Endothelial cell of umbilical vein (primary cell): ENCODE measurements at regions of chr1 and their contacts with region 1.

Region 1: DNA sequence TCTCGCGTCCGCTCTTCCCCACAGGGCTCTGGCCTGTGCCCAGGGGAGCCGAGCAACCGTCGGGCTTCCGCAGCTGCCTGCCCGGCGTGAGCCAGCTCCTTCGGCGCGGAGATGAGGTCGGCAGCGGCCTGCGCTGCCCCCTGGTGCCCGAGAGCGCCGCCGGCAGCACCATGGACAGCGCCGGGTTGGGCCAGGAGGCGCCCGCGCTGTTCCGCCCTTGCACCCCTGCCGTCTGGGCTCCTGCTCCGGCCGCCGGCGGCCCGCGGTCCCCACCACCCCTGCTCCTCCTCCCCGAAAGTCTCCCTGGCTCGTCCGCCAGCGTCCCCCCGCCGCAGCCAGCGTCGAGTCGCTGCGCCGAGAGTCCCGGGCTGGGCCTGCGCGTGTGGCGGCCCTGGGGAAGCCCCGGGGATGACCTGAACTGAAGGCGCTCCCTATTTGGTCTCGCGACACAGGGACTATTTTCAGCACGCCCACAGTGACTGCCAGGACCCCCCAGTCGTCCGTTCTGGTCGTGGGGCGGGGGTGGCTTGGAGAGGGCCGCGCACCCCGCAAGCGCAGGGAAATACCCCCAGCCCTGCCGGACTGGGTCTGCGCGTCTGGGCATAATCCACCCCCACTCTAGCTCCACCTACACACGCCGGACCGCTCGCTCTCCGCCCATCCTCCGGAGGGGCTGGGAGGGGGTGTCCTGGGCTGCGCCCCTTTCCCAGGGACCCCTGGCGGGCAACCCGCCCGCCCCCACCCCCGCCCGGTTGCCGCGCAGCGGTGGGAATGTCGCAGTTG is 1.3 kb downstream of the HES3 start:
- DNase-seq: peak; percentile 66
- H3K4me3 ChIP-seq: peak overlapping the region; percentile 5 to 28 (median 15)
- H3K27ac ChIP-seq: no peak overlapping the region
- H3K4me1 ChIP-seq: peaks cover 5% of the 10 kb centered on the region
- H3K27me3 ChIP-seq: peaks cover 33 to 50% of the 10 kb centered on the region in 2 experiments
- CTCF ChIP-seq: peak; percentile 85 to 95
- POLR2A ChIP-seq: no peak

Region 2: DNA sequence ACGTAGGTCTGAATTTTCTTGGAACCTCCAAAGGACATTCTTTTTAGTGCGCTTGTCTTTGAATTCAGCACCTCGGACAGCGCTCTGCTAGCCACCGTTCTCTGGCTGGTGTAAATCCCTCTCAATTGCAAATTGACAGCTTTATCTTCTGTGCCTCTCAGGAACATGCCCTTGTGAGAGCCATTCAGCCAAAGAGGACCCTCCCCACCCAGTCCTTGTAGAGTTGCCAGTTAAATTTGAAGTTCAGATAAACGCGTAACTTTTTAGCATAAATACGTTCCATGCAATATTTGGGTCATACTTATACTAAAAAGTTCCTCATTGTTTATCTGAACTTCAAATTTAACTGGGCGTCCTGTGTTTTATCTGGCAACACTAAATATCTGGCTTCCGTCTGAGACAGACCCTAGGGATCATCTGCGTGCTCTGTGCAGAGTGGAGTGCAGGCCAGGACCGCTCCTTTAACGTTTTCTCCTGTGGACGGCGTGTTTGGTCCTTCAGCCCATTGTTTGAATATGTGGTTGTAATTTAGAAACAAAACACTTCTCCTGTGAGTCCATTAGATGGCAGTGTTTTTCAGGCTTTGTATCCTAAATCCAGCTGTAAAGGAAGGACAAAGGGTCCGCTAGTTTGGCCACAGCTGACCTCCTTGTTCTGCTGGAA is 192.6 kb before region 1 on chr1:
- CTCF ChIA-PET with region 1: interaction called, 93 read pairs
- POLR2A ChIA-PET with region 1: no interaction called
- dilution Hi-C with region 1: no loop called
- intact Hi-C with region 1: loop called (anchors 1 kb)
- DNase-seq: peak; percentile 70
- H3K4me3 ChIP-seq: no peak overlapping the region
- H3K27ac ChIP-seq: no peak overlapping the region
- H3K4me1 ChIP-seq: no peaks in the 10 kb centered on the region
- H3K27me3 ChIP-seq: no peaks in the 10 kb centered on the region
- CTCF ChIP-seq: peak; percentile 59 to 62
- POLR2A ChIP-seq: no peak

Region 3: GRCh38 chr1:6185635-6186382 is 59.5 kb before region 1 on chr1:
- CTCF ChIA-PET with region 1: interaction called, 14 read pairs
- POLR2A ChIA-PET with region 1: no interaction called
- dilution Hi-C with region 1: no loop called
- intact Hi-C with region 1: no loop called
- DNase-seq: peak; percentile 26
- H3K4me3 ChIP-seq: no peak overlapping the region
- H3K27ac ChIP-seq: no peak overlapping the region
- H3K4me1 ChIP-seq: no peaks in the 10 kb centered on the region
- H3K27me3 ChIP-seq: peaks cover 10 to 11% of the 10 kb centered on the region in 2 experiments
- CTCF ChIP-seq: peak; percentile 43 to 44
- POLR2A ChIP-seq: no peak

Region 4: DNA sequence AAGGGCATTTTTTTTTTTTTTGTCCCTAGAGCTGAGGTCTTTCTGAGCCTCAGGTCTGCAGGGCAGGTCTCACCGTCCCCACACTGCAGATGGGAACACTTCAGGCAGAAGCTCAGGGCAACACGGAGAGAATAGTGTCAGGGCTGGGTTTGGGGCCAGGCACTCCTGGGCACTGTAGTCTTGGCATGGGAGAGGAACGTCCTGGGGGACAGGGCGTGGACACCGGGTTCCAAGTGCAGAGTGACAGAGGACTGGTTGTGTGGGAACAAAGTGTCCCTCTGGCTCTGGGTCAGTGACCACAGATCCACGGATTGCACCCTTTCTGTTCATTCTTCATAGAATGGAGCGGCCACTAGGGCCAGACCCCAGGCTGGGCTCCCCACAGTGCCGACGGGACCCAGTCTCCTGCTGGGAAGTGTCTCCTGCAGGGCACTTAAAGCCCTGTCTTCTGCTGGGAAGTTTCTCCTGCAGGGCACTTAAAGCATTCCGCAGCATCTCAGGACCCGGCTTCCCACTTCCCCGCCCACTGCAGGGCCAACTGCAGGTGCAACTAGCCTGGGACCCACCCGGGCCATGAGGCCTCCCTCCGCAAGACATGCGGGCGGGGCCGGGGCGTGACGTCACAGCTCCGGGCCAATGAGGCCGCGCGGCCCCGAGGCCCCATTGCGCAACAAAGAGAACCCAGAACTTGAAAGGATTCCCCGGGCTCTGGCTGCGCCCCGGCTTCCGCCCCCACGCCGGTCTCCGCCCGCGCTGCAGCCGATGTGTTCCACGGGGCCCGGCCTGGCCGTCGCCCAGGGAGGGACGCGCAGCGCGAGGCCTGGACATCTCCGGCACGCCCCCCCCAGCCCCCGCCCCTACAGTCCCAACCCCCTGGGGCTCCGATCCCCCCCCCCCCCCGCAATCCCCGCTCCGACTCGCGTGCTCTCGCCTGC is 14.5 kb after region 1 on chr1:
- CTCF ChIA-PET with region 1: interaction called, 21 read pairs
- POLR2A ChIA-PET with region 1: no interaction called
- dilution Hi-C with region 1: no loop called
- intact Hi-C with region 1: loop called (anchors 1 kb)
- DNase-seq: peak; percentile 64
- H3K4me3 ChIP-seq: peak overlapping the region in 2 of 3 experiments; percentile 34 to 55
- H3K27ac ChIP-seq: no peak overlapping the region
- H3K4me1 ChIP-seq: no peaks in the 10 kb centered on the region
- H3K27me3 ChIP-seq: no peaks in the 10 kb centered on the region
- CTCF ChIP-seq: no peak
- POLR2A ChIP-seq: no peak

Region 5: GRCh38 chr1:6343506-6344405 is 98.5 kb after region 1 on chr1:
- CTCF ChIA-PET with region 1: interaction called, 208 read pairs
- POLR2A ChIA-PET with region 1: no interaction called
- dilution Hi-C with region 1: no loop called
- intact Hi-C with region 1: loop called (anchors 1 kb)
- DNase-seq: peak; percentile 67
- H3K4me3 ChIP-seq: no peak overlapping the region
- H3K27ac ChIP-seq: no peak overlapping the region
- H3K4me1 ChIP-seq: peaks cover 7% of the 10 kb centered on the region
- H3K27me3 ChIP-seq: no peaks in the 10 kb centered on the region
- CTCF ChIP-seq: peak; percentile 89 to 94
- POLR2A ChIP-seq: no peak

Region 6: GRCh38 chr1:6401673-6402072 is 156.4 kb after region 1 on chr1:
- CTCF ChIA-PET with region 1: interaction called, 39 read pairs
- POLR2A ChIA-PET with region 1: no interaction called
- dilution Hi-C with region 1: no loop called
- intact Hi-C with region 1: loop called (anchors 1 kb)
- DNase-seq: no peak
- H3K4me3 ChIP-seq: no peak overlapping the region
- H3K27ac ChIP-seq: no peak overlapping the region
- H3K4me1 ChIP-seq: no peaks in the 10 kb centered on the region
- H3K27me3 ChIP-seq: no peaks in the 10 kb centered on the region
- CTCF ChIP-seq: no peak
- POLR2A ChIP-seq: no peak